ENCODE measurements at regions of chr10 and their contacts with region 1.

Region 1: DNA sequence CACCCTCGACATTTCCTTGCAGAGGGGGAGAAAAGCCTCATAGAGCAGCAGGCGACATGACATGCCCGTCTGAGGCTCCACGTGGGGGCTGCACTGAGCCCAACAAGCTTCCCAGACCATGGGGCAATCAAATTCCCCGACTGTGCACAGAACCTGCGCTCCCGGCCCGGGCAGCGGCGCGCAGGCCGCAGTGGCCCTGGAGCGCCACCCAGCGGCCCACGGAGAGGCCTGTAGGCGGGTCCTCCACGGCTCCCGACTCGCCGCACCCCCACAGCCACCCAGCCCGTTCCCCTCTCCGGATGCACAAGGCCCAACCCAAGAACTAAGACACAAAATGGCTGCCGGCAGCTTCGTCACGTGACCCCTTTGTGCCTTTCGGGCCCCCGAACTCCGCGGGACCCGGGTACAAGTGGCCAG is 816 bp downstream of the EPC1 start:
- DNase-seq: peak; percentile 97
- ATAC-seq: peak; percentile 88
- H3K4me3 Mint-ChIP-seq: peak overlapping the region; percentile 89
- H3K27ac Mint-ChIP-seq: peak overlapping the region; percentile 99
- H3K4me1 Mint-ChIP-seq: peaks cover 65% of the 10 kb centered on the region
- H3K27me3 Mint-ChIP-seq: no peaks in the 10 kb centered on the region
- CTCF ChIP-seq: peak; percentile 84

Region 2: GRCh38 chr10:32190890-32191491 is 155.2 kb before region 1 on chr10:
- CTCF ChIA-PET with region 1: interaction called, 3 read pairs
- POLR2A ChIA-PET with region 1: no interaction called
- intact Hi-C with region 1: loop called (anchors 1 kb)
- DNase-seq: no peak
- ATAC-seq: peak; percentile 47
- H3K4me3 Mint-ChIP-seq: no peak overlapping the region
- H3K27ac Mint-ChIP-seq: no peak overlapping the region
- H3K4me1 Mint-ChIP-seq: no peaks in the 10 kb centered on the region
- H3K27me3 Mint-ChIP-seq: no peaks in the 10 kb centered on the region
- CTCF ChIP-seq: peak; percentile 77

Region 3: DNA sequence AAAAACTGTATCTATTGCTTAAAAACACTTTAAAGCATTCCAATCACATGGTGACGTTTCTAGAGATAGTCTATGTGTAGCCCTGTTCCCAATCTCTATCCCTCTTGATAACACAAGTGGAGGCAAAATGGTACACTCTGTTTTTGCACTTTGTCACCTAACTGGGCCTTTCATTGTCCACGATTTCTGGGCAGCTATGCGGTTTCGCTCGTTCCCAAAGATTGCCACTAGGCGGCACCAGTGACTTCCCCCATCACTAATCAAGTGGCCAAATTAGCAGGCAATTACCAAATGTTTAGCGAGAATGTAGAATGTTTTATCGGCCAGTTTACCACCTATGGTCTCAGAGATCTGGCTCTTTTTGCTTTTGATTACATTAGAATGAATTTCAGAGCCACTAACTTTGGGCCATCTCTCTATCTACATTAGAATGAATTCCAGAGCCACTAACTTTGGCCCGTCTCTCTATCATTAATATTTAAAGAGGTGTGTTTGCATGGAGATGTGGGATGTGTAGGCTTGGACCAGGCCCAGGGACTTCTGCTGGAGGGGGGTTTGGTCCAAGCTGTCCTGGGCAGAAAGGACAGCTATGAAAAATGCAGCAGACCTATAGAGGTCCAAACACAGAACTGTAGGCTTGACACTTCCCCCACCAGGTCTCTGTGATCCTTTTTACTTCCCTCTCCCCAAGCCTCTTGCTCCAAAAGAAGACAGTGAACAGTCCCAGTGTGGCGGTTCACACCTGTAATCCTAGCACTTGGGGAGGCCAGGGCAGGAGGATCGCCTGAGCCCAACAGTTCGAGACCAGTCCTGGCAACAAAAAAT is 89.3 kb before region 1 on chr10:
- CTCF ChIA-PET with region 1: interaction called, 18 read pairs
- POLR2A ChIA-PET with region 1: interaction called, 9 read pairs
- intact Hi-C with region 1: loop called (anchors 1 kb)
- DNase-seq: peak; percentile 83
- ATAC-seq: peak; percentile 86
- H3K4me3 Mint-ChIP-seq: no peak overlapping the region
- H3K27ac Mint-ChIP-seq: no peak overlapping the region
- H3K4me1 Mint-ChIP-seq: peaks cover 14% of the 10 kb centered on the region
- H3K27me3 Mint-ChIP-seq: no peaks in the 10 kb centered on the region
- CTCF ChIP-seq: peak; percentile 84

Region 4: DNA sequence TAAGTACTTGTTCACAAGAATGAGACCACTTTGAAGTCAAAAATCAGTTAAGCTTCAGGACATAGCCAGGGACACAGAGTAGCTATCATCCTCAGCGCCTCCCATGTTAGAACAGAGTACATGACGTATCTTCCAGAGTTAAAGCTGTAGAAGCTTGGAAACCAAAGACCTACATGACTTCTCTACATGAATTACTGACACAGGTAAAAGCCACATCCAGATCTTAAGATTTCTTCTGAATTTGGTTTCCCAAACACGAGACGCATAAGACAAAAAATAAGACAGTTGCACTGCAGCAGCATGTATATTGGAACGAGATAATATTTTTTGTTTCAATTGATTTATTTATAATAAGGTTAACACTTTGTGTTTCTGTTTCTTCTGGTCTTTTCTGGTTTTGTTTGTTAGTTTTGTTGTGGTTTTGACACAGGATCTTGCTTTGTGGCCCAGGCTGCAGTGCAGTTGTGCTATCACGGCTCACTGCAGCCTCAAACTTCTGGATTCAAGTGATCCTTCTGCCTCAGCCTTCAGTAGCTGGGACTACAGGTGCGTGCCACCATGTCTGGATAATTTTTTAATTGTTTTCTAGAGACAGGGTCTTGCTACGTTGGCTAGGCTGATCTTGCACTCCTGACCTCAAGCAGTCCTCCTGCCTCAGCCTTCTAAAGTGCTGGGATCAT is 11.1 kb after region 1 on chr10:
- CTCF ChIA-PET with region 1: interaction called, 12 read pairs
- POLR2A ChIA-PET with region 1: interaction called, 11 read pairs
- intact Hi-C with region 1: no loop called
- DNase-seq: no peak
- ATAC-seq: peak; percentile 71
- H3K4me3 Mint-ChIP-seq: peak overlapping the region; percentile 62
- H3K27ac Mint-ChIP-seq: peak overlapping the region; percentile 89
- H3K4me1 Mint-ChIP-seq: peaks cover 63% of the 10 kb centered on the region
- H3K27me3 Mint-ChIP-seq: no peaks in the 10 kb centered on the region
- CTCF ChIP-seq: no peak